CD4-positive, alpha-beta memory T cell (primary cell): ENCODE measurements at regions of chr19 and their contacts with region 1.

Region 1: GRCh38 chr19:8180061-8180460 is 29.1 kb upstream of the CERS4 start:
- DNase-seq: no peak
- H3K4me3 ChIP-seq: no peak overlapping the region
- H3K4me3 Mint-ChIP-seq: no peak overlapping the region
- H3K27ac ChIP-seq: no peak overlapping the region
- H3K27ac Mint-ChIP-seq: no peak overlapping the region
- H3K4me1 ChIP-seq: peaks cover 15% of the 10 kb centered on the region
- H3K4me1 Mint-ChIP-seq: peaks cover 2 to 14% (median 8%) of the 10 kb centered on the region in 4 donors
- H3K27me3 ChIP-seq: no peaks in the 10 kb centered on the region
- H3K27me3 Mint-ChIP-seq: no peaks in the 10 kb centered on the region

Region 2: GRCh38 chr19:8069096-8069973 is 110.7 kb before region 1 on chr19:
- CTCF ChIA-PET with region 1: no interaction called
- POLR2A ChIA-PET with region 1: no interaction called
- intact Hi-C with region 1: no loop called
- DNase-seq: no peak
- H3K4me3 ChIP-seq: no peak overlapping the region
- H3K4me3 Mint-ChIP-seq: no peak overlapping the region
- H3K27ac ChIP-seq: no peak overlapping the region
- H3K27ac Mint-ChIP-seq: no peak overlapping the region
- H3K4me1 ChIP-seq: no peaks in the 10 kb centered on the region
- H3K4me1 Mint-ChIP-seq: no peaks in the 10 kb centered on the region
- H3K27me3 ChIP-seq: no peaks in the 10 kb centered on the region
- H3K27me3 Mint-ChIP-seq: peaks cover 0 to 2% of the 10 kb centered on the region in 2 donors

Region 3: GRCh38 chr19:8208922-8209461 is 28.9 kb after region 1 on chr19 and contains the start of gene CERS4:
- CTCF ChIA-PET with region 1: interaction called, 4 read pairs
- POLR2A ChIA-PET with region 1: interaction called, 21 read pairs
- intact Hi-C with region 1: loop called (anchors 1 kb)
- DNase-seq: peak in 3 of 5 donors; percentile 76 to 78 (median 78)
- H3K4me3 ChIP-seq: peak within 1 kb of the TSS; percentile 63 to 79
- H3K4me3 Mint-ChIP-seq: peak within 1 kb of the TSS; percentile 82 to 92 (median 92)
- H3K27ac ChIP-seq: peak within 1 kb of the TSS; percentile 84
- H3K27ac Mint-ChIP-seq: peak within 1 kb of the TSS; percentile 85 to 96 (median 93)
- H3K4me1 ChIP-seq: peaks cover 19% of the 10 kb centered on the region
- H3K4me1 Mint-ChIP-seq: peaks cover 12 to 29% (median 22%) of the 10 kb centered on the region in 4 donors
- H3K27me3 ChIP-seq: no peaks in the 10 kb centered on the region
- H3K27me3 Mint-ChIP-seq: no peaks in the 10 kb centered on the region
- total RNA-seq, gene CERS4: 29.2 to 30.6 TPM